Breast epithelium (tissue), 4 donors: ENCODE measurements at regions of chr10 and their contacts with region 1.

Region 1: DNA sequence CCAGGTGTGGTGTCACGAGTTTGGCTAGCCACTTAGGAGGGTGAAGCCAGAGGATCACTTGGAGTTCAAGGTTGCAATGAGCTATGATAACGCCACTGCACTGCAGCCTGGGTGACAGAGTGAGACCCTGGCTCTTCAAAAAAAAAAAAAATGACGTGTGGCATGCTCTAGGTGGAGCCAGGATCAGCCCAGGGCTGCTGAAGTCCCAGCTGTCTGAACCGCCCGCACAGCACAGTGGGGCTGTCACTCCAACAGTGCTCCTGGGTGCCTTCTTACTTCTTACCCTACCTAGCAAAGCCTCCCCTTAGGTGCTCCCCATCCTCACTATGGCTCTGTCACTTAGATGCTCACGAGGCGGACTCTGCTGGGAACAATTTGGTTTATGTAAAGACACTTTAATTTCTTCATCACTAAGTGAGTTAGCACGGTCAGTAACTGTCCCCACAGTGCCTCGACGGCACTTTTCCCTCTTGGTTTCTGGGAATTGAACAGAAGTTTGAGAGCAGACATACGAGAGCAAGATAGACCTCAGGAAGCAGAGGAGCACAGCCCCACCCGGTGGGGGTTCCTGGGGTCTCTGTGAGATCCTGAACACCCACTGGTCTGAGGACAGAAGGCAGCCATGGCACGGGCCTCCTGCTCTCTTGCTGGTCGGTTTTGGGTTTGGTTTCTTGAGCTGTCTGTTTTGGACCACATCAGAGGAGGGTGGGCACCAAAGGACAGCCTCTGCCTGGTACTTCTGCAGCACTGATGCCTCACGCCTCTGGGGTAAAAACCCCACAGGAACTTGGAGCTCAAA is 66.2 kb upstream of the BTBD16 start:
- DNase-seq: no peak
- H3K4me3 ChIP-seq: no peak overlapping the region
- H3K27ac ChIP-seq: no peak overlapping the region
- H3K4me1 ChIP-seq: no peaks in the 10 kb centered on the region
- H3K27me3 ChIP-seq: no peaks in the 10 kb centered on the region
- CTCF ChIP-seq: no peak
- POLR2A ChIP-seq: no peak

Region 2: GRCh38 chr10:122188706-122189105 is 16.2 kb before region 1 on chr10:
- intact Hi-C with region 1: loop called (anchors 1 kb)
- DNase-seq: peak in 1 of 2 donors; percentile 21
- H3K4me3 ChIP-seq: no peak overlapping the region
- H3K27ac ChIP-seq: peak overlapping the region in 1 of 2 donors; percentile 22
- H3K4me1 ChIP-seq: no peaks in the 10 kb centered on the region
- H3K27me3 ChIP-seq: no peaks in the 10 kb centered on the region
- CTCF ChIP-seq: no peak
- POLR2A ChIP-seq: no peak